ENCODE measurements at regions of chr18 and their contacts with region 1.

Region 1: DNA sequence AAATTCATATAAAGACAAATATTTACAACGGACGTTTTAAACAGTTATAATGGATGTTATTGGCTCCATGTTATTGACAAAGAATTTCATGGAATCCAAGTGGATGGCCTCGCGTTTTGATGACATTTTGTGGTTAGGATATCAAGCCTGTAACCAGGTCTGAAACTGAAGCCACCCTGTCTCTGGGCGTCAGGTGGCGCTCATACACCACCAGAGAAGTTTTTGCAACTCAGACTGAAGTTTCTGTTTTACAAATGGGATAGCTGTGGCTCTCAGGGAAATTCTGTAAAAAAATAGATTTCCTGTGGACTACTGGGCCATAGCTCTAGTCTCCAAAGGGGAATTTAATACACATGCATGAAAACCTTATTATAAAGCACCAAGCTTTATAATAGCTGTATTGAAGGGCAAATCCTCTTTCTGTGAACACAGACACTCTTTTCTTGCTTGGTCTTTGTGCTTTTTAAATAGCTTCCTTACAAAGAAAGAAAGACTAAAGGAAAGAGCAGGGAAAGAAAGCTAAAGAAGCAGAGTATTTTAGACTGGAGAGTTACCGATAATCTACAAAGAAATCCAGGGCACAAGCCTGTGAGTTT is 86.7 kb downstream of the C18orf54 start:
- DNase-seq: peak; percentile 53
- H3K4me3 ChIP-seq: no peak overlapping the region
- H3K27ac ChIP-seq: no peak overlapping the region
- H3K4me1 ChIP-seq: no peaks in the 10 kb centered on the region
- H3K27me3 ChIP-seq: peaks cover 0 to 35% (median 0%) of the 10 kb centered on the region in 7 donors
- CTCF ChIP-seq: peak in 8 of 11 experiments; percentile 15 to 51 (median 32)
- POLR2A ChIP-seq: no peak

Region 2: DNA sequence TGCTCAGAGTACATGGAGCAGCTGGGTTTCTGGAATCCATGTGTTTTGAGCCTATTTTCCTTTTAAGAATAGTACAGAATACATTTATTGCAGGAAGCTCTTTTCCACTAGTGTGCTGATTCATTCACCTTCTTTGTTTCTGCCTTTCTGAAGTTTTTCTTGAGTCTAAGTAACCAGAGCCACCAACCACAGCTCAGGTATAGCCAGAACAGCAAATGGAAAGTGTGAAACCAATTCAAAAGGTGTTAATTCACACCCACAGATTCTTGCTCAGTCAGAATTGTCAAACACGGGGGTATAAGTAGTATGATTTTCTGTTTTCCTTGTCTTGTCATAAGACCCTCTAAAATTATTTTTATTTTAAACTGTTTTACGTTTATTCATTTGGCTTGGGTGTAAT is 70.7 kb after region 1 on chr18:
- intact Hi-C with region 1: no loop called
- DNase-seq: no peak
- H3K4me3 ChIP-seq: peak overlapping the region in 2 of 8 donors; percentile 13 to 30
- H3K27ac ChIP-seq: peak overlapping the region in 2 of 8 donors; percentile 28 to 37
- H3K4me1 ChIP-seq: no peaks in the 10 kb centered on the region
- H3K27me3 ChIP-seq: no peaks in the 10 kb centered on the region
- CTCF ChIP-seq: no peak
- POLR2A ChIP-seq: no peak

Region 3: GRCh38 chr18:54671291-54671881 is 227.0 kb after region 1 on chr18:
- intact Hi-C with region 1: loop called (anchors 5 kb)
- DNase-seq: no peak
- H3K4me3 ChIP-seq: no peak overlapping the region
- H3K27ac ChIP-seq: no peak overlapping the region
- H3K4me1 ChIP-seq: no peaks in the 10 kb centered on the region
- H3K27me3 ChIP-seq: peaks cover 0 to 8% (median 0%) of the 10 kb centered on the region in 7 donors
- CTCF ChIP-seq: peak in 9 of 11 experiments; percentile 9 to 54 (median 32)
- POLR2A ChIP-seq: no peak